Caco-2 (cell line): ENCODE measurements at regions of chr7 and their contacts with region 1.

Region 1: GRCh38 chr7:141999058-141999623 is 3.5 kb downstream of the MGAM start:
- DNase-seq: peak in 1 of 2 experiments; percentile 35
- H3K4me3 ChIP-seq: no peak overlapping the region
- H3K4me3 Mint-ChIP-seq: no peak overlapping the region
- H3K27ac Mint-ChIP-seq: no peak overlapping the region
- H3K4me1 ChIP-seq: peaks cover 22% of the 10 kb centered on the region
- H3K4me1 Mint-ChIP-seq: peaks cover 21% of the 10 kb centered on the region
- H3K27me3 ChIP-seq: no peaks in the 10 kb centered on the region
- H3K27me3 Mint-ChIP-seq: no peaks in the 10 kb centered on the region
- CTCF ChIP-seq: no peak

Region 2: DNA sequence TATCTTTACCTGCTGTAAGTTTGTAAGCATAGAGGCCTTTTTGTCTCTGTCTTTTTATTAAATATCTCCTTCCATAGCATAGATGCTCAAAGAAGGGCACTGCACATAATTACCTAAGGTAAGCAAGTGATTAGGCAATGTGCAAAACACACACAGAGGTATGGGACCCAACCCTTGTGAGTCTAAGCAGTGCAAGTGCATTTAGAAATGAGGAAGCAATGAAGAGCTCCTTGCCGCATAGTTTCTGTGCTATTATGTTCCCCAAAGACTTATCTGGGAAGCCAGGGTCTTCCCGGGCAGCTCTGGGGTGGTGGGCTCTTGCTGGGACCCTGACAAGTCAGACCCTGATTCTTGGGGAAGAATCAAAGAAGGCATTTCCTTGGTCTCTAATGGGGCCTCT is 98.9 kb after region 1 on chr7:
- CTCF ChIA-PET with region 1: no interaction called
- POLR2A ChIA-PET with region 1: no interaction called
- intact Hi-C with region 1: loop called (anchors 5 kb)
- DNase-seq: no peak
- H3K4me3 ChIP-seq: no peak overlapping the region
- H3K4me3 Mint-ChIP-seq: no peak overlapping the region
- H3K27ac Mint-ChIP-seq: no peak overlapping the region
- H3K4me1 ChIP-seq: peaks cover 15% of the 10 kb centered on the region
- H3K4me1 Mint-ChIP-seq: peaks cover 20% of the 10 kb centered on the region
- H3K27me3 ChIP-seq: no peaks in the 10 kb centered on the region
- H3K27me3 Mint-ChIP-seq: no peaks in the 10 kb centered on the region
- CTCF ChIP-seq: no peak